Naive thymus-derived CD8-positive, alpha-beta T cell (primary cell): ENCODE measurements at regions of chr17 and their contacts with region 1.

Region 1: GRCh38 chr17:75779231-75779986 is 5.2 kb upstream of the UNK start:
- DNase-seq: peak; percentile 79 to 99 (median 95)
- ATAC-seq: peak; percentile 69 to 70
- H3K4me3 Mint-ChIP-seq: peak overlapping the region; percentile 85 to 100 (median 96)
- H3K27ac Mint-ChIP-seq: peak overlapping the region; percentile 94 to 100 (median 99)
- H3K4me1 Mint-ChIP-seq: peaks cover 26 to 67% (median 60%) of the 10 kb centered on the region in 4 donors
- H3K27me3 Mint-ChIP-seq: peaks cover 0 to 6% (median 0%) of the 10 kb centered on the region in 5 donors

Region 2: DNA sequence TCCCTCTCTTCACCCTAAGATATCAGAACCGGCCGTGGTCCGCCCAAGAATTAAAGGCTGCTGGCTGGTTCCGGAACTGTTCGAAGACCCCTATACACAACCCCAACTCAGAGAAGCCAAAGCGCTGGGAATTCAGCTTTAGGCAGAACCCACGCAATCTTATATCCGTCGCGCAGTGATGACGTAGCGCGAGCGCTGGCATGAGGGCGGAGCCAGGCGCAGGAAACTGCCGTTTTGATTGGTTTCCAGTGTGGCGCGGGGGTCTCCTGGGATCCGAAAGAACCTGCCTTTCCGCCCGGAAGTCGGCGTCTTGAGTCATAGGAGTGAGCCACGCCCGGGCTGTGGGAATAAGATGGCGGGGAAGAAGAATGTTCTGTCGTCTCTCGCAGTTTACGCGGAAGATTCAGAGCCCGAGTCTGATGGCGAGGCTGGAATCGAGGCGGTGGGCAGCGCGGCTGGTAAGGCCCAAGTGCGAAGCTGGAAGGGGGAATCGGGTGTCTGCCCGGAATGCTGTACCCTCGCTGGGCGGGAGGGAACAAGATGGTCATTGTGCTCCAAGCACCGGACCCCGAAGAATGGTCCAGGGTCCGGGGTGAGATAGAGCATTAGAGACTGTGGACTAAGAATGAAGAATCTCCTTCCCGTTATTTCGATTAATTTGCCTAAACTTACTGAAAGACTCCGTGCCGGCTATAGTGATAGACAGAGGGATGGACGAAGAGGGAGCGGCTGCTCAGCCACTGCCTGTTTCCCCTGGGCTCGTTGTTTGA is 112.2 kb before region 1 on chr17 and contains the starts of genes RECQL5 and SAP30BP:
- POLR2A ChIA-PET with region 1: interaction called, 10 read pairs
- DNase-seq: peak; percentile 95 to 99 (median 96)
- ATAC-seq: peak; percentile 100
- H3K4me3 Mint-ChIP-seq: peak within 1 kb of the TSS in 7 of 10 donors; percentile 12 to 76 (median 60)
- H3K27ac Mint-ChIP-seq: peak within 1 kb of the TSS in 7 of 10 donors; percentile 18 to 84 (median 60)
- H3K4me1 Mint-ChIP-seq: peaks cover 16 to 34% (median 23%) of the 10 kb centered on the region in 4 donors
- H3K27me3 Mint-ChIP-seq: no peaks in the 10 kb centered on the region
- polyA plus RNA-seq, gene RECQL5: 12.3 to 23.4 (median 19.3) TPM
- polyA plus RNA-seq, gene SAP30BP: 57.8 to 72.0 (median 69.6) TPM

Region 3: GRCh38 chr17:75749545-75750389 is 29.6 kb before region 1 on chr17:
- POLR2A ChIA-PET with region 1: interaction called, 596 read pairs
- DNase-seq: peak; percentile 71 to 93 (median 86)
- ATAC-seq: peak; percentile 67 to 73
- H3K4me3 Mint-ChIP-seq: peak overlapping the region in 1 of 10 donors; percentile 11
- H3K27ac Mint-ChIP-seq: peak overlapping the region in 3 of 10 donors; percentile 27 to 83 (median 51)
- H3K4me1 Mint-ChIP-seq: peaks cover 10 to 18% (median 15%) of the 10 kb centered on the region in 4 donors
- H3K27me3 Mint-ChIP-seq: peaks cover 0 to 3% (median 0%) of the 10 kb centered on the region in 5 donors

Region 4: GRCh38 chr17:75822119-75822799 is 42.9 kb after region 1 on chr17:
- POLR2A ChIA-PET with region 1: interaction called, 25 read pairs
- DNase-seq: peak in 8 of 10 donors; percentile 20 to 80 (median 43)
- ATAC-seq: peak; percentile 78 to 95
- H3K4me3 Mint-ChIP-seq: peak overlapping the region in 8 of 10 donors; percentile 14 to 77 (median 54)
- H3K27ac Mint-ChIP-seq: peak overlapping the region; percentile 81 to 93 (median 90)
- H3K4me1 Mint-ChIP-seq: peaks cover 11 to 31% (median 20%) of the 10 kb centered on the region in 4 donors
- H3K27me3 Mint-ChIP-seq: no peaks in the 10 kb centered on the region

Region 5: DNA sequence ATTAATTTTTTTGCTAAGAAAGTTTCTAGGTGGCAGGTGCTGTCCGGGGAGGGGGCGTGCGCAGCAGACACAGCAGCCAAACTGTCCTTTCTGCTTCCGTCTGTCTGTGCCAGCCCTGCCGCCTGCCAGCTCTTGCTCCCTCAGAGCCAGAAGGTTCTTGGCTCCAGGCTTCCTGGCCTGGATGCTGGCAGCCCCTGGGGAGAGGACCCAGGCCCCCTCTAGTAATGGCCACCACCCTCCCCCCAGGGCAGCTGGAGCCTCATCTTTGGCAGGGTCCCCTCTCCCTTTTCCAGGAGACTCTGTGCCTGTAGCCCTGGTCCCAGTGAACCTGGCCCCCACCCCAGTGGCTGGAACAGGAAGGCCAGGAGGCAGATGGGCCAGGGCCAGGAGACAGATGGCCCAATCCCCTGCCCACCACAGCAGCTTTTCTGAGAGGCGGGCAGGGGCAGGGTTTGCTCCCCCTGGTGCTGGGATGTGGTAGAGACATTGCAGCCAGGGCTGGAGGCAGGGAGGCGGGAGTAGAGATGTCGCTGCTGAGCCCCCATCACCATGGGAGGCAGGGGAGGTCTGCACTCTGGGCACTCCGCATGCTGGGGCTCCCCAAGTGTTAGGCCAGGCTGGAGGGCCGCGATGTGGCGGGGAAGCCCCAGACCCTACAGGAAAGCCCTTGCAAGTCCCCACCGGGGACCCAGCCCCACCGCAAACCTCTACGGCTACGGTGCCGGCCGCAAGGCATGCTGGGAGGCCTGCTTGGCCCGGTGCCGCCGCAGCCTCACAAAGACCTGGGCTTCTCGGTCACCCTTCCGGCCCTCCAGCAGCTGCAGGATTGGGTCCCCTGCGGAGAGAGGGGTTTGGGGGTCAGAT is 48.1 kb after region 1 on chr17:
- POLR2A ChIA-PET with region 1: interaction called, 74 read pairs
- DNase-seq: peak; percentile 47 to 82 (median 58)
- ATAC-seq: peak; percentile 68 to 70
- H3K4me3 Mint-ChIP-seq: peak overlapping the region; percentile 52 to 79 (median 63)
- H3K27ac Mint-ChIP-seq: peak overlapping the region; percentile 25 to 93 (median 85)
- H3K4me1 Mint-ChIP-seq: peaks cover 6 to 33% (median 20%) of the 10 kb centered on the region in 4 donors
- H3K27me3 Mint-ChIP-seq: no peaks in the 10 kb centered on the region

Region 6: DNA sequence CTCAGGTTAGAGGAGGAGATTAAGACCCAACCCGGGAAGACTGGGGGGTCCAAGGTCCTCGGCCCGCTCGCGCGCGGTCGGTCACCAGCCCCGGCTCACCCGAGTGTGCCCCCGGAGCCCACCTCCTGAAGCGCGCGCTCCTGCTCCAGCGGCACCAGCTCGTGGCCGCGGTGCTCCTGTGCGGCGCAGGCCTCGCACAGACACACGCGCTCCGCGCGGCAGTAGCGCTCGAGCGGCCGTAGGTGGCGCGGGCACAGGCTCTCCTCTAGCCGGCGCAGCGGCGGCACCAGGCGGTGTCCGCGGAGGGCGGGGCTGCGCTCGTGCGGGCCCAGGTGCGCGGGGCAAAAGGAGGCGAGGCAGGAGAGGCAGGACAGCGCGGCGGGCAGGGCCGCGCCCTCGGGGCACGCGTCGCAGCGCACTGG is 98.4 kb after region 1 on chr17:
- POLR2A ChIA-PET with region 1: interaction called, 13 read pairs
- DNase-seq: peak; percentile 51 to 81 (median 66)
- ATAC-seq: peak; percentile 71
- H3K4me3 Mint-ChIP-seq: peak overlapping the region; percentile 80 to 92 (median 87)
- H3K27ac Mint-ChIP-seq: peak overlapping the region; percentile 65 to 96 (median 92)
- H3K4me1 Mint-ChIP-seq: peaks cover 25 to 57% (median 53%) of the 10 kb centered on the region in 4 donors
- H3K27me3 Mint-ChIP-seq: peaks cover 0 to 2% (median 0%) of the 10 kb centered on the region in 5 donors

Region 7: GRCh38 chr17:75896415-75897159 is 117.2 kb after region 1 on chr17 and contains the start of gene TRIM65:
- POLR2A ChIA-PET with region 1: interaction called, 16 read pairs
- DNase-seq: peak; percentile 56 to 84 (median 76)
- ATAC-seq: peak; percentile 84 to 87
- H3K4me3 Mint-ChIP-seq: peak within 1 kb of the TSS; percentile 75 to 87 (median 82)
- H3K27ac Mint-ChIP-seq: peak within 1 kb of the TSS; percentile 77 to 92 (median 86)
- H3K4me1 Mint-ChIP-seq: peaks cover 19 to 28% (median 26%) of the 10 kb centered on the region in 4 donors
- H3K27me3 Mint-ChIP-seq: no peaks in the 10 kb centered on the region
- polyA plus RNA-seq, gene TRIM65: 13.4 to 31.8 (median 18.9) TPM